Activated CD8-positive, alpha-beta T cell treated with anti-CD3 and anti-CD28 coated beads for 36 hours (primary cell): ENCODE measurements at regions of chr11 and their contacts with region 1.

Region 1: DNA sequence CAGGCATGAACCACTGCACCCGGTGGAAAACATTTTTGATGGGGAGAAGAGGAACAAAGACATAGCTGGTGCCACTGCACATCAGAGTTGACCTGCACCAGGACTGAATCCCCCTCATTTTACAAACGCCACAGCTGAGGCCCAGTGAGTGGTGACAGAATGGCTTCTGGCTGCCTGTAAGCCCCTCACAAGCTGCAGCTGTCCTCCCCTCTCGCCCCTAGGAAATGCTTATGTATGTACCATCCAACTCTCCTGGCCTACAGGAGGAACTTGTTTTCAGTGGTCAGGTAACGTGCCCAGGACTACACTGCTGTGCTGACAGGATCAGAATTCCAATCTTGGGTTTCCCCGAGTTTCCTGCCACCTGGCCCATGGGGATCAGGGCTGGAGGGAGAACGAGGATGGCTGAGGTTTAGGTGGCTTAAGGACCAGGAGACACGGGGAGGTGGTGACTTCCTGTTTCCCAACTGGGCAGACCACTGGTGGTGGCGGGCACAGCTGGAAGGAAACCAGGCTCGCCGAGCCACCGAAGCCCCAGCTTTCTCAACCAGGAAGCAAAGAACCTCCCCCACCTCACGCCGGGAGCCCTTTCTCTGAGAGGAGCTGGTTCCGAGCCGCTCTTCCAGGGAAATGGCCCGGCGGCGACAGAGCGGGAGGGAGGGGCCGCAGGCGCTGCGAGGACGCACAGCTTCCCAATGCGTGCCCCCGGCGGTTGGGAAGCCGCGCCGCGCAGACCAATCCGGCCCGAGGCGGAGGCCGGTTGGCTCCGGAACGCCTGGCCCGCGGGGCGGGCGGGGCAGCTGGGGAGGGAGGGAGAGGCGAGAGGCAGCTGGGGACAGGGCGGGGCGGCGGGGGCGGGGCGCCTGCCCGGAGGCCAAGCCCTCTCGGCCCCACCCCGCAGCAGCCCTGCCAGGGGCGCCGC is 1.0 kb upstream of the LRFN4 start:
- DNase-seq: peak; percentile 90
- ATAC-seq: peak; percentile 89
- H3K4me3 Mint-ChIP-seq: peak overlapping the region; percentile 89
- H3K27ac Mint-ChIP-seq: peak overlapping the region; percentile 77
- H3K4me1 Mint-ChIP-seq: peaks cover 14% of the 10 kb centered on the region
- H3K27me3 Mint-ChIP-seq: no peaks in the 10 kb centered on the region
- CTCF ChIP-seq: no peak

Region 2: GRCh38 chr11:66842896-66843775 is 12.7 kb before region 1 on chr11 and contains the start of gene RCE1:
- CTCF ChIA-PET with region 1: interaction called, 18 read pairs
- POLR2A ChIA-PET with region 1: interaction called, 66 read pairs
- intact Hi-C with region 1: no loop called
- DNase-seq: peak; percentile 91
- ATAC-seq: peak; percentile 93
- H3K4me3 Mint-ChIP-seq: peak within 1 kb of the TSS; percentile 93
- H3K27ac Mint-ChIP-seq: peak within 1 kb of the TSS; percentile 93
- H3K4me1 Mint-ChIP-seq: peaks cover 49% of the 10 kb centered on the region
- H3K27me3 Mint-ChIP-seq: no peaks in the 10 kb centered on the region
- CTCF ChIP-seq: no peak
- total RNA-seq, gene RCE1: 22.1 to 26.8 TPM

Region 3: DNA sequence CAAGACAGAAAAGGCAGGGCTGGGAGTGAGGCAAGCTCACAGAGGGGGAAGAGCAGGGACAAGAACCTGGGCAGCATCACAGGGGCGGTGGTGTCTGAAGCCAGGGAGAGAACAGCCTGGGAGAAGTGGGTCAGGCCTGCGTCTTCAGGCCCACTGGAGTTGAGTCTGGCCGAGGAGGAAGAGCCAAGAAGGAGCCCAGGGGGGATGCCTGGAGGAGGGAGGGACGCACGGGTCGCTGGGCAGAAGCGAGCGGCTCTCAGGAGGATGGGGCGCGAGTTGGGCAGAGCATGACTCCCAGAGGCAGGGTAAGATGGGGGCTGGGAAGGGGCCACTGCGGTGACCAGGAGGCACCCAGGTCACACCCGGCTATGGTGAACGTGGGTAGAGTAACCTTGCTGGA is 19.5 kb after region 1 on chr11:
- CTCF ChIA-PET with region 1: no interaction called
- POLR2A ChIA-PET with region 1: no interaction called
- intact Hi-C with region 1: no loop called
- DNase-seq: no peak
- ATAC-seq: no peak
- H3K4me3 Mint-ChIP-seq: no peak overlapping the region
- H3K27ac Mint-ChIP-seq: no peak overlapping the region
- H3K4me1 Mint-ChIP-seq: peaks cover 3% of the 10 kb centered on the region
- H3K27me3 Mint-ChIP-seq: no peaks in the 10 kb centered on the region
- CTCF ChIP-seq: no peak